Astrocyte of the cerebellum (primary cell): ENCODE measurements at regions of chr5 and their contacts with region 1.

Region 1: GRCh38 chr5:4970171-4970570 is 170.0 kb upstream of the ADAMTS16 start:
- DNase-seq: no peak
- H3K4me3 ChIP-seq: no peak overlapping the region
- CTCF ChIP-seq: no peak

Region 2: GRCh38 chr5:4939042-4939794 is 31.0 kb before region 1 on chr5:
- in situ Hi-C with region 1: no loop called
- DNase-seq: no peak
- H3K4me3 ChIP-seq: no peak overlapping the region
- CTCF ChIP-seq: no peak

Region 3: GRCh38 chr5:5025775-5026406 is 55.7 kb after region 1 on chr5:
- in situ Hi-C with region 1: no loop called
- DNase-seq: no peak
- H3K4me3 ChIP-seq: no peak overlapping the region
- CTCF ChIP-seq: no peak

Region 4: DNA sequence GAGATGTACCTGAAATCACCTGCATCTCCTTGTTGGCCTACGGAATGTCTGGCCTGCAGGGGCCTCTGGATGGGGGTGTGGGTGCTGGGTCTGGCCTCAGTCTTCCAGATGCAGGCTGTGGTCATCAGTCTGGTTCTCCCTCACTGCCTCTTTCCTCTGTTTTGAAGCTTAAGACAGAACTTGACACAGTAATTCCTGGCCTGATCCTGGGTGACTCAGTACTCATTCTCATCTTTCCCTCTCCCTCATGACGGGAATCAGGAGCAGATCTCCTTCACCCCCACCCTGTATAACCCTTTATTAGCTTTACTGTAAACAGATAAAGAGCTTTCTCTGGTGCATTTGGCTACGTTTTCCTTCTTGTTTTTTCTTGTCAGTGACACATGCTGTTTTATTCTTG is 80.6 kb after region 1 on chr5:
- in situ Hi-C with region 1: loop called (anchors 5 kb)
- DNase-seq: no peak
- H3K4me3 ChIP-seq: no peak overlapping the region
- CTCF ChIP-seq: no peak

Region 5: GRCh38 chr5:5063533-5063953 is 93.4 kb after region 1 on chr5:
- in situ Hi-C with region 1: no loop called
- DNase-seq: no peak
- H3K4me3 ChIP-seq: no peak overlapping the region
- CTCF ChIP-seq: peak; percentile 37

Region 6: DNA sequence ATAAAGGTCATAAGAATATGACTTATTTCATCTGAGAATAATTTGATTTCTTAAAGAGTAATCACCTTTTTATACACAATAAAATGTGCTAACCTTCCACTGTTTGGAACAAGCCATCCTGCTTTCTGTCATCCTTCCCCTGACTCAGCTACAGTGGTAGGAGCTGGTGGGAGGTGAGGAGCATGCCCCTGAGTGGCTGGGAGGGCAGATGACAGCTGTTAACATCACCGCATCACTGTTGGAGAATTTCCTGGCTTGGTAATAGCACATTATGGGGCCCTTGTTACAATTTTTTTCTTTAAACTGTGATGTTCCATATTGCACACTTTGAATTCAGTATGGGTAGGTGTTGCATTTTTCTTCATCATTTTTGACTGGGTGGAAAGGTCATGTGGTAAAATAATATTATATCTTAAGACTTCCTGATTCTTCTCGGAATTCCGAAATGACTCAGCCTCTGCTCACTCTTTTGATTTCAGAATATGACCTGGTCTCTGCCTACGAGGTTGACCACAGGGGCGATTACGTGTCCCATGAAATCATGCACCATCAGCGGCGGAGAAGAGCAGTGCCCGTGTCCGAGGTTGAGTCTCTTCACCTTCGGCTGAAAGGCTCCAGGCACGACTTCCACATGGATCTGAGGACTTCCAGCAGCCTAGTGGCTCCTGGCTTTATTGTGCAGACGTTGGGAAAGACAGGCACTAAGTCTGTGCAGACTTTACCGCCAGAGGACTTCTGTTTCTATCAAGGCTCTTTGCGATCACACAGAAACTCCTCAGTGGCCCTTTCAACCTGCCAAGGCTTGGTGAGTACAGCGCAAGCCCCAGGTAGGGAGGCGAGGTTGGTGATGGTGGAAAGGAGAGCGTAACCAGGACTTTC is 175.7 kb after region 1 on chr5:
- in situ Hi-C with region 1: no loop called
- DNase-seq: no peak
- H3K4me3 ChIP-seq: no peak overlapping the region
- CTCF ChIP-seq: no peak